Activated CD8-positive, alpha-beta T cell treated with anti-CD3 and anti-CD28 coated beads for 36 hours (primary cell): ENCODE measurements at regions of chr9 and their contacts with region 1.

Region 1: DNA sequence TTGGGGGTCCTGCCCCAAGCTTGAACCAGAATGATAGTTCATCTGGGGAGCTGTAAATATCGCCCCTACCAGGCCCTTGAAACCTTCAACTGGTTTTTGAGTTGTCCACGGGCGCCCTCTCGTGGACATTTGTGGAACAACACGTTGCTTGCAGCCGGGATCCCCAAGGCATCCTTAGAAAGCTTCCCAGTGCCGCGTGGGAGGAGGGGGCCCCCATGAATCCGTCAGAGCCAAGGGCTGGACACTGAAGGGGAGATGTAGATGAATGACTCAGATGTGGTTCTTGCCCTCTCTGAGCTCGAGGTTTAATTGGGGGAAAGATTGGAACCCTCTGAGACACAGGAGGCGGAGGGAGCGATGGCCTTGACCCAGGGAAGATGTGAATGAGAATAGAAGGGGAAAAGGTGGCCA is 31.8 kb upstream of the ORM1 start:
- DNase-seq: peak; percentile 83
- ATAC-seq: peak; percentile 79
- H3K4me3 Mint-ChIP-seq: no peak overlapping the region
- H3K27ac Mint-ChIP-seq: no peak overlapping the region
- H3K4me1 Mint-ChIP-seq: no peaks in the 10 kb centered on the region
- H3K27me3 Mint-ChIP-seq: peaks cover 2% of the 10 kb centered on the region
- CTCF ChIP-seq: peak; percentile 93

Region 2: DNA sequence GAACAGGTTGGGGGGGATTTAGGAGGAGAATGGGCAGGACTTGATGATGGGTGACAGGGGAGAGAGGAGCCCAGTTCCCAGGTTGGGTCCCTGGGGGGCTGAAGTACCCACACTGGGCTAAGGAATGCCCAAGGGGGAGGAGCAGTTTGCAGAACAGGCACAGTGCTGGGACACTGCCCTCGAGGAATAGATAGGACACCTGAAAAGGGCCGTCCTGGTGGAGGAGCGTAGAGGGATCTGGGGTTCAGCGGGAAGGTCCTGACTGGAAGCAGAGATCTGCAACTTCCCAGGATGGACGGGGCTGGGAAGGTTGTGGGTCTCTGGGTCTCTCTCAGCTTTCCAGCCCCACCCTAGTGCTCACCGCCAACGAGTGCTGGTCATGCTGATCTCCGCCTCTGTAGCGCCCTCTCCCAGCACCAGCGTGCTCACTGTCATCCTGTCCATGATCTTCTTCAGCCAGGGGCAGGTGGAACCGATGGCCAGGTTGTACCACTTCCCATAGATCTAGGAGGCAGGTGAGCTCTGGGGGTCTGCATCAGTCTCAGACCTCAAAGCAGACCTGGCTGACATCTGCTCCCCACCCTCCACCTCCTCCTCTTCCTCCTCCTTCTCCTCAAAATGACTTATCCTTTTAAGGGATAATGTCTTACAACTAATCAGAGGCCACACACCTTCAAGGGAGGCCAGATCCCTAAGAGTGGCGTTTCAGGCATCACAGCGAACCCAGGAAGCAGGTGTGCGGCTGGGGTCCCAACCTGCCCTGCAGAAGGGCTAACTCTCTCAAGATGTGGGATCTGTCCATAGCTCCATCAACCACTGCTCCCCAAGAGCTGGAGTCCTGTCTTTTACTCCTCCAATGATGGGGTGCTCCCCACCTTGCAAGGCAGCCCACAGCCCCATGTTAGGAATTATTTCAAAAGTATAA is 214.6 kb before region 1 on chr9:
- CTCF ChIA-PET with region 1: interaction called, 45 read pairs
- POLR2A ChIA-PET with region 1: no interaction called
- intact Hi-C with region 1: loop called (anchors 5 kb)
- DNase-seq: no peak
- ATAC-seq: no peak
- H3K4me3 Mint-ChIP-seq: no peak overlapping the region
- H3K27ac Mint-ChIP-seq: no peak overlapping the region
- H3K4me1 Mint-ChIP-seq: no peaks in the 10 kb centered on the region
- H3K27me3 Mint-ChIP-seq: peaks cover 2% of the 10 kb centered on the region
- CTCF ChIP-seq: no peak

Region 3: GRCh38 chr9:114082017-114082762 is 208.9 kb before region 1 on chr9:
- CTCF ChIA-PET with region 1: interaction called, 45 read pairs
- POLR2A ChIA-PET with region 1: no interaction called
- intact Hi-C with region 1: loop called (anchors 5 kb)
- DNase-seq: peak; percentile 91
- ATAC-seq: peak; percentile 93
- H3K4me3 Mint-ChIP-seq: no peak overlapping the region
- H3K27ac Mint-ChIP-seq: no peak overlapping the region
- H3K4me1 Mint-ChIP-seq: no peaks in the 10 kb centered on the region
- H3K27me3 Mint-ChIP-seq: no peaks in the 10 kb centered on the region
- CTCF ChIP-seq: peak; percentile 81

Region 4: DNA sequence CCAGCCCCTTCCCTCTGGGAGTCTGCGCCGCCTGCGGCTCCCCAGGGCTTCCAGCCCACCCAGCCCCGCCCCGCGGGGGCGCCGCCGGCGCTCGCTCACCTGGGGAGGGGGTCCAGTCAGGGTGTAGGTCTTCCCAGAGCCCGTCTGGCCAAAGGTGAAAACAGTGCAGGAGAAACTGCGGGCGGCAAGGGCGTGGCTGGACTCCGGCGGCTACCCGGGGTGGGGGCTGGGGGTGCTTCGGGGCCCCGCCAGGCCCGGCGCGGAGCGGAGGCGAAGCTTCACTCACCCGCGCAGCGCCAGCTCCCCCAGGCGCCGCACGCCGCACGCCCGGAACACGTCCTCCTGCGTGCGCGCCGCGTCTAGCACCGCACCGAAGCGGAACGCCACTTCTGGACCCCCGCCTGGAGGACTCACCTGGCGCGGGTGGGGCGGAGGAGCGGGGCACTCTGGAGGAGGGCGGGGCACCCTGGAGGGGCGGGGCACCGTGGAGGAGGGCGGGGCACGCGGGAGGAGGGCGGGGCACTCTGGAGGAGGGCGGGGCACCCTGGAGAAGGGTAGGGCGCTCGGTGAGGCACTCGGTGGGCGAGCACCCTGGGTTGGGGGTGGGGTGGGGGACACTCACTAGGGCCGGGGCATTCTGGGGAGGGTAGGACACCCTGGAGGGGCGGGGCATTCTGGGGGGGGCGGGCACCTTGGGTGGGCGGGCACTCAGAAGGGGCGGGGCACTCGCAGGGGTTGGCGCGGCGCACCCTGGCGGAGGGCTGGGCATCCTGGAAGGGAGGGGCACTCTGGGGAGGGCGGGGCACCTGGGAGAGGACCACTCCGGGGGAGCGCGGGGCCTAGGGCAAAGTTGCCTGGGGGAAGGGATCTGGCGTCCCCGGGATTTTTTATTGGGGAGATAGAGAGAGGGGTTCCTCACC is 192.8 kb before region 1 on chr9:
- CTCF ChIA-PET with region 1: interaction called, 16 read pairs
- POLR2A ChIA-PET with region 1: interaction called, 5 read pairs
- intact Hi-C with region 1: no loop called
- DNase-seq: peak; percentile 47
- ATAC-seq: peak; percentile 84
- H3K4me3 Mint-ChIP-seq: no peak overlapping the region
- H3K27ac Mint-ChIP-seq: no peak overlapping the region
- H3K4me1 Mint-ChIP-seq: peaks cover 4% of the 10 kb centered on the region
- H3K27me3 Mint-ChIP-seq: peaks cover 41% of the 10 kb centered on the region
- CTCF ChIP-seq: no peak

Region 5: GRCh38 chr9:114108016-114108833 is 182.8 kb before region 1 on chr9:
- CTCF ChIA-PET with region 1: interaction called, 71 read pairs
- POLR2A ChIA-PET with region 1: interaction called, 3 read pairs
- intact Hi-C with region 1: loop called (anchors 5 kb)
- DNase-seq: peak; percentile 75
- ATAC-seq: peak; percentile 98
- H3K4me3 Mint-ChIP-seq: no peak overlapping the region
- H3K27ac Mint-ChIP-seq: no peak overlapping the region
- H3K4me1 Mint-ChIP-seq: no peaks in the 10 kb centered on the region
- H3K27me3 Mint-ChIP-seq: peaks cover 4% of the 10 kb centered on the region
- CTCF ChIP-seq: peak; percentile 84

Region 6: DNA sequence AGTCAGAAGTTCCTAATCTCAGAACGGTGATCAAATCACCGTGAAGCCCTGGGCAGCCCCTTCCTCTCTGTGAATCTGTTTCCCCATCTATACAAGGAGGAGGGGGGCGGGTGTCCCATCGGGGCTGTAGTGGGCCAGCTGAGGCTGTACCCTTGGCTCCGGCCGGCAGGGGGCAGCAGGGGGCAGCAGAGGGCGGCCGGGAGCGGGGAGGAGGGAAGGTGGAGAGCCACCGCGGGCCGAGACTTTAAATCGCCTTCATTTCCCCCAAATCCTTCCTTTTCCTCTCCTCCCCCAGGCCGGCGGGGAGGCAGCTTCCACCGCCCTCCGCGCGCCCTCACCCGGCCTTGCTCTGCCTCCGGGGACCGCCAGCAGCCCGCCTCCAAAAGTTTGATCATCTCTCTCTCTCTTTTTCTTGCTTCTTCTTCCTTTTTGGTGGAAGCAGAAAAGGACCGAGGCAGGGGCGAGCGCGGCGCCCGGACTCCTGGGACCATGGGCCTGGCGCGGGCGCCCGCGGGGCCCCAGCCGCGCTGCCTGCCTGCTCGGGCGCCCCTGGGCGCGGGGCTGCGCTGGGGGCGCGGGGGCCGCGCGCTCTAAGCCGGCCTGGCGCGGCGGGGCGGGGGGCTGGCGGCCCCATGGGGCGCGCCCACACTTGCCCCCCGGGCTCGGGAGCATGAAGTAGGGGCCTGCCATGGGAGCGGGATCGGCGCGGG is 135.7 kb before region 1 on chr9 and contains the start of gene COL27A1:
- CTCF ChIA-PET with region 1: interaction called, 65 read pairs
- POLR2A ChIA-PET with region 1: interaction called, 3 read pairs
- intact Hi-C with region 1: loop called (anchors 5 kb)
- DNase-seq: peak; percentile 90
- ATAC-seq: peak; percentile 88
- H3K4me3 Mint-ChIP-seq: peak within 1 kb of the TSS; percentile 78
- H3K27ac Mint-ChIP-seq: peak within 1 kb of the TSS; percentile 72
- H3K4me1 Mint-ChIP-seq: peaks cover 21% of the 10 kb centered on the region
- H3K27me3 Mint-ChIP-seq: peaks cover 45% of the 10 kb centered on the region
- CTCF ChIP-seq: peak; percentile 85
- total RNA-seq, gene COL27A1: 8.4 to 9.7 TPM

Region 7: DNA sequence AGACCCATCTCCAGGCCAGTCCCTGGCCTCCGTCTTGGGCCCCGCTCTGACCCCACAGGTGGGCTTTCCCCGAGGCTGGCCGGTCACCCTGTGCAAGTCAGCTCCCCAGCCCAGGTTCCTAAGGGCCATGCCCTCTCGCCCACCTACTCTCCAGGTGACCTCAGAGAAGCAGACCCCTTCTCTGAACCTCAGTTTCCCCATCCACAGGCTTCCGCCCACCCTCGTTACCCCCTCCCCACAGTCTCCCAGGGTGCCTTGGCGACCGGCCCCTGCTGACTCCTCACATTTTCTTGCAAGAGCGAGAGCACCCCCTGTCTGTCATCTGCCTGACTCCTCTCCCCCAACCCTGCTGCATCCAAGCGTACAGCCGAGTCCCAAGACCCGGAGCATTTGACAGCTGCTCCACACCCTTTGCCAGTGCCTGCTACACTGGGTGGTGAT is 19.4 kb before region 1 on chr9:
- CTCF ChIA-PET with region 1: interaction called, 10 read pairs
- POLR2A ChIA-PET with region 1: no interaction called
- intact Hi-C with region 1: no loop called
- DNase-seq: peak; percentile 35
- ATAC-seq: peak; percentile 37
- H3K4me3 Mint-ChIP-seq: no peak overlapping the region
- H3K27ac Mint-ChIP-seq: no peak overlapping the region
- H3K4me1 Mint-ChIP-seq: no peaks in the 10 kb centered on the region
- H3K27me3 Mint-ChIP-seq: no peaks in the 10 kb centered on the region
- CTCF ChIP-seq: peak; percentile 21

Region 8: DNA sequence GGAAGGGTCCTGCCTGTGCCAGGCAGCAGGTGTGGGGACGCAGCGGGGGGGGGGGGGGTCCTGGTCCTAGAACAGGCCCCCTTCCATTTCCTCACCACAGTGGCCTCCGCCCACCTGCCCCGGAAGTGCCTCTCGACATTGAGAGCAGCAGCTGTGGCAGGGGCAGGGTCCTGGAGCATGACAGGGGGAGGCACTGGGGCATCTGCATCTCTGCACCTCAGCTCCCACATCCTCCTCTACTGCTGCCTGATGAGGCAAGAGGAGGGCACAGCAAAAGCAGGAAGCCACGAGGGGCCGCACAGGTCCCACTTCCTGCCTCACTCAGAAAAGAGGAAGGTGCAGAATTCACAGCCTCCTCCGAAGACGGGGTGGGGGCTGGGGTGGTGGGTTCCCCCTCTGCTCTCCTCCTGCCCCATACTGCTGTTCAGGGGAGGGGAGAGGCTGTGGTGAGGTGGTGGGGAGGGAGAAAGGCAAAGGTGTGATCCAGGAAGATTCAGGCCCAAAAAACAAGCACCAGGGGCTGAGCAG is 81.9 kb after region 1 on chr9:
- CTCF ChIA-PET with region 1: no interaction called
- POLR2A ChIA-PET with region 1: no interaction called
- intact Hi-C with region 1: no loop called
- DNase-seq: peak; percentile 96
- ATAC-seq: peak; percentile 84
- H3K4me3 Mint-ChIP-seq: peak overlapping the region; percentile 72
- H3K27ac Mint-ChIP-seq: peak overlapping the region; percentile 89
- H3K4me1 Mint-ChIP-seq: peaks cover 90% of the 10 kb centered on the region
- H3K27me3 Mint-ChIP-seq: no peaks in the 10 kb centered on the region
- CTCF ChIP-seq: no peak